Calu3 (cell line): ENCODE measurements at regions of chr10 and their contacts with region 1.

Region 1: GRCh38 chr10:79068562-79069324 is at the start of gene ZMIZ1:
- DNase-seq: peak; percentile 92
- H3K4me3 Mint-ChIP-seq: peak within 1 kb of the TSS; percentile 70
- H3K27ac Mint-ChIP-seq: peak within 1 kb of the TSS; percentile 63
- H3K4me1 Mint-ChIP-seq: peaks cover 31% of the 10 kb centered on the region
- H3K27me3 Mint-ChIP-seq: no peaks in the 10 kb centered on the region
- CTCF ChIP-seq: peak; percentile 23
- total RNA-seq, gene ZMIZ1: 20.3 and 23.5 TPM in 2 replicates

Region 2: GRCh38 chr10:78302989-78303854 is 765.5 kb before region 1 on chr10:
- CTCF ChIA-PET with region 1: no interaction called
- intact Hi-C with region 1: loop called (anchors 5 kb)
- DNase-seq: peak; percentile 98
- H3K4me3 Mint-ChIP-seq: peak overlapping the region; percentile 92
- H3K27ac Mint-ChIP-seq: peak overlapping the region; percentile 75
- H3K4me1 Mint-ChIP-seq: peaks cover 7% of the 10 kb centered on the region
- H3K27me3 Mint-ChIP-seq: peaks cover 35% of the 10 kb centered on the region
- CTCF ChIP-seq: peak; percentile 79

Region 3: DNA sequence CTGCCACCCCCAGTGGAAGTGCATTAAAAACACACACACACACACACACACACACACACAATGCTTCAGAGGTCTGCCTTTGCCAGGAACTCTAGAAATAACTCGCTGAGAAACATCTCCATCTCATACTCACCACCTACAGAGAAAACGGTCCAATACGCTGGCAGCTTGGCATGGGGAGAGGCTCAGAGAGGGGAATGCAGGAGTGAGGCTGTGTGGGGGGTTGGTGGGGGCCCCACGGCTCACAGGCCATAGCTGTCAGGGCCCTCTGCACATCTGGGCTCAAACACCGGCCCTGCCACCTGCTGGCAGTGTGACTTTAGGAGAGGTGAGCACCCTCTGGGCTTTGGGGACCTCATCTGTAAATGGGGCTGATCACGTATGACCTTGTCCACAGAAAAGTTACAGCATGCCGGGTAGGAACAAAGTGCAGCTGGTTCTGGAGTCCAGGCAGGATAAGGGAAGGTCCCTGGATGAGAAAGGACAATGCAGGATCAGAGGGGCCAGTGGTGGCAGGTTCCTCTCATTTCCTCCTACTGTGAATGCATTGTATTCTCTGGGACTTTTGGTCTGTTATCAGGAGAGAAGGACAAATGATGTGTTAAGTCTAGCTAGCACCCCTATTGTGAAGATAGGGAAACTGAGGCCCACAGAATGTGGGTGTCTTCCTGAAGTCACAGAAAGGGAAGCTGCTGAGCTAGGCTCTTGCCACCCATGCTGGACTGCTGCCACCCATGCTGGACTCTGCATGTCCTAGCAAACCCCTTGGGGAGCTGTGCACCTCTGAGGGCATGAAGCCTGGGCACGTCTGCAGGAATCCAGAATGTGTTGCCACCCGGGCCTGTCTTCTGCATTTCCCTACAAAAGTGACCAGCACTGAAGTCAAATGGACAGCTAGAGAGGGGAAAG is 630.5 kb before region 1 on chr10:
- CTCF ChIA-PET with region 1: no interaction called
- intact Hi-C with region 1: loop called (anchors 10 kb)
- DNase-seq: no peak
- H3K4me3 Mint-ChIP-seq: no peak overlapping the region
- H3K27ac Mint-ChIP-seq: no peak overlapping the region
- H3K4me1 Mint-ChIP-seq: no peaks in the 10 kb centered on the region
- H3K27me3 Mint-ChIP-seq: peaks cover 75% of the 10 kb centered on the region
- CTCF ChIP-seq: peak; percentile 25

Region 4: GRCh38 chr10:78972947-78973900 is 95.5 kb before region 1 on chr10:
- CTCF ChIA-PET with region 1: interaction called, 6 read pairs
- intact Hi-C with region 1: loop called (anchors 5 kb)
- DNase-seq: peak; percentile 88
- H3K4me3 Mint-ChIP-seq: peak overlapping the region; percentile 65
- H3K27ac Mint-ChIP-seq: peak overlapping the region; percentile 93
- H3K4me1 Mint-ChIP-seq: peaks cover 65% of the 10 kb centered on the region
- H3K27me3 Mint-ChIP-seq: no peaks in the 10 kb centered on the region
- CTCF ChIP-seq: no peak

Region 5: DNA sequence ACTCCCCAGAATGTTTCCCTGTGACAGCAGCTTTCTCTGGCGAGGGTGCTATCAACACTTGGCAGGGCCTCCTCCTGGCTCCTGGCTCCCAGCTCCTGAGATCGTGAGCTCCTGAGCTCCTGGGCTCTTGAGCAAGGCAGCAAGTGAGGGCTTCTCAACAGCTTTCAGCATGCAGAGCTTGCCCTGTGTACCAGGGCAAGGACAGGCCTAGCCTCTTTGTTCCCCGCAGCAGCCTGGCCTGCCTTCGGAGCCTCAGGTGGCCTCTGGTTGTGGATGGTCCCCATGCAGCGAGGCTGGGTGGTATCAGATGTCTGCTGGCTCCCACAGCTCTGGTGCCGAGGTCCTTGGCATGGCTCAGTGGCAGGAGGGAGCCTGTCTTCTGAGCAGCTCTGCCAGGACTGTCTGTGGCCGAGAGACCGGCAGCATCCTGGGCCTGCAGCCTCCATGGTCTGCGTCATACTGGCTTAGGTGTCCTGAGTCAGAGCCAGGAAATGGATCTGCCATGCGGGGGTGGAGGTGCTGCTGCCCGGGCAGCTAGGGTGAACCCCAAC is 44.2 kb after region 1 on chr10:
- CTCF ChIA-PET with region 1: interaction called, 4 read pairs
- intact Hi-C with region 1: loop called (anchors 5 kb)
- DNase-seq: peak; percentile 66
- H3K4me3 Mint-ChIP-seq: peak overlapping the region; percentile 38
- H3K27ac Mint-ChIP-seq: peak overlapping the region; percentile 52
- H3K4me1 Mint-ChIP-seq: peaks cover 68% of the 10 kb centered on the region
- H3K27me3 Mint-ChIP-seq: no peaks in the 10 kb centered on the region
- CTCF ChIP-seq: no peak

Region 6: GRCh38 chr10:79127151-79127961 is 58.6 kb after region 1 on chr10:
- CTCF ChIA-PET with region 1: no interaction called
- intact Hi-C with region 1: loop called (anchors 2 kb)
- DNase-seq: peak; percentile 91
- H3K4me3 Mint-ChIP-seq: peak overlapping the region; percentile 7
- H3K27ac Mint-ChIP-seq: peak overlapping the region; percentile 10
- H3K4me1 Mint-ChIP-seq: peaks cover 42% of the 10 kb centered on the region
- H3K27me3 Mint-ChIP-seq: no peaks in the 10 kb centered on the region
- CTCF ChIP-seq: no peak